H1 (cell line): ENCODE measurements at regions of chr14 and their contacts with region 1.

Region 1: GRCh38 chr14:95361373-95362137 is 41.8 kb upstream of the CLMN start:
- DNase-seq: peak; percentile 72 to 86
- H3K4me3 ChIP-seq: peak overlapping the region; percentile 30 to 56 (median 42); a peak in 7 of 8 replicates
- H3K27ac ChIP-seq: peak overlapping the region; percentile 47; the same call in 1 of the 2 replicates
- H3K4me1 ChIP-seq: peaks cover 7 to 31% (median 19%) of the 10 kb centered on the region in 4 experiments
- H3K27me3 ChIP-seq: peaks cover 0 to 2% (median 0%) of the 10 kb centered on the region in 4 experiments; a peak in 3 of 7 replicates
- CTCF ChIP-seq: peak; percentile 76 to 89 (median 81)
- EP300 ChIP-seq: no peak
- POLR2A ChIP-seq: 0 out of 3 replicates have a peak, but pooled peaks of 1 of the 2 experiments have one; percentile 59
- RAD21 ChIP-seq: peak; percentile 58 to 71

Region 2: GRCh38 chr14:95185033-95185766 is 176.4 kb before region 1 on chr14:
- CTCF ChIA-PET with region 1: interaction called, 10 read pairs
- POLR2A ChIA-PET with region 1: no interaction called
- DNase-seq: no peak
- H3K4me3 ChIP-seq: no peak overlapping the region
- H3K27ac ChIP-seq: no peak overlapping the region
- H3K4me1 ChIP-seq: no peaks in the 10 kb centered on the region; a peak in 1 of 7 replicates
- H3K27me3 ChIP-seq: no peaks in the 10 kb centered on the region
- CTCF ChIP-seq: no peak
- EP300 ChIP-seq: no peak
- POLR2A ChIP-seq: no peak
- RAD21 ChIP-seq: no peak

Region 3: DNA sequence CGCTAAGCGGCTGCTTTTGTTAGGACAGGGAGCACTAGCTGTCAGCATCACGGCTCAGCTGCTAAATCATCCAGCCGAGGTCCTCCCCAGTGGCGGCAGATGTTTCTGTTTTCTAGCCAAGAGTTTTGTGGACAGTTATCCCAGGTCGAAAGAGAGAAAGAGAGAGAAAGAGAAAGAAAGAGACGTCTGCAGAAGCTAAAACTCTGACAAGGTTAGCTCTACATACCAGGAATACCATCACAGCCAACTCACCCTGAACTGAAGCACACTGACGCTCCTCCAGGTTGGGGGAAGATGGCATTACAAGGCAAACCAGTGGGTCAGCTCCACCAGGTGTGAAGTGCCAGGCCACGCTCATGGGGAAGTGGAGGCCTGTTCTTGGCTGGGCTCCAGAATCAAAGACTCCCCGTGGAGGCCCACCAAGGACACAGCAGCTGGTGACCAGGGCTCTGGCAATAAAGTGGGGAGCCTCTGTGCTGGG is 139.4 kb before region 1 on chr14:
- CTCF ChIA-PET with region 1: interaction called, 11 read pairs
- POLR2A ChIA-PET with region 1: no interaction called
- DNase-seq: no peak
- H3K4me3 ChIP-seq: no peak overlapping the region
- H3K27ac ChIP-seq: no peak overlapping the region
- H3K4me1 ChIP-seq: peaks cover 11 to 36% (median 25%) of the 10 kb centered on the region in 4 experiments
- H3K27me3 ChIP-seq: peaks cover 0 to 8% (median 3%) of the 10 kb centered on the region in 4 experiments; a peak in 4 of 7 replicates
- CTCF ChIP-seq: no peak
- EP300 ChIP-seq: no peak
- POLR2A ChIP-seq: no peak
- RAD21 ChIP-seq: no peak

Region 4: DNA sequence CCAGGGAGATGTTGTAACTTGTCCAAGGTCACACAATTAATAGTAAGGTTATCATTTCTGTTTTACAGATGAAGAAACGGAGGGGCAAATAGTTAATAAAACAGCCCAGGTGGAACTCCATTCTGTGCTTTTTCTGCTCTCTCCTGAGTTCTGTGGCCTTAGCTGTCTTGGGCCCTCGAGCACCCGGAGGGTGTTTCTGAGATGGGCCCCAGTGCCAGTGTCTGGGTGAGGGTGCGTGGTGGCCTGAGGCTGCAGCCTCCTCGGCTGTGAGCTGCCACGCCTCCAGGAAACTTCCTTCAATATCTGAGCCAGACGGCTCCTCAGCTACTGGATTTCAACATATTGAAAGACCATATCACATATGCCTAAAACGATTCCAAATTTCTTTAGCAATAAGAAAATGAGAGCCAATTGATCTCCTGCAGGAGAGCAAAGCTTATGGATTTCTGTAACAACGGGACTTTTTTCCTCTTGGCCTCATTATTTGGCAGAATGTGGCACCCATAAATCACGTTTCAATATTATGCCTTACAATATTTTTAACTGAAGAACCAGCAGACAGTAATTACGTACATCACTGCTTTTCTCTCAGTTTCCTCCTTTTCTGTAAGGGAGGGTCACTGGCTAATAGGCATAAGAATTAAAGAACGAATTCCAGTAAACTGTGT is 129.5 kb before region 1 on chr14:
- CTCF ChIA-PET with region 1: interaction called, 10 read pairs
- POLR2A ChIA-PET with region 1: no interaction called
- DNase-seq: no peak
- H3K4me3 ChIP-seq: no peak overlapping the region
- H3K27ac ChIP-seq: no peak overlapping the region
- H3K4me1 ChIP-seq: peaks cover 0 to 3% (median 1%) of the 10 kb centered on the region in 4 experiments; a peak in 3 of 7 replicates
- H3K27me3 ChIP-seq: no peaks in the 10 kb centered on the region
- CTCF ChIP-seq: no peak
- EP300 ChIP-seq: no peak
- POLR2A ChIP-seq: no peak
- RAD21 ChIP-seq: no peak

Region 5: DNA sequence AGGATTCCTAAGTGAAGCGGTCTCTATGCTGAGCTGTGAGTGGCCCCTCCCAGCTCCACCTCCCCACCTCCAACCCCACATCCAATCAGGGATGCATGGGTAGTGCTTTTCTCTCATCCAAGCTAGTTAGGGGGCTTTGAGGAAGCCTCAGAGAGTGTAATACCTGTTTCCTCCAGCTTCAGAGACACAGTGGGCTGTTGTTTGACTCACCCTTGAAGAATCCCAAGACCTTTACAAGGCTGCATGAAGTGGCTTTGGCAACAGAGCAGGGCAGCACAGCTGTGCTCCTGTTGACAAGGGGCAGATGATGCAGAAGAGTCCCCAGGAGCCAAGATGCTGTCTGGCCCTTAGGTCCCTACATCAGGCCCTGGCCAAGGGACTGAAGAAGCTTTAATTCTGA is 14.7 kb before region 1 on chr14:
- CTCF ChIA-PET with region 1: interaction called, 39 read pairs
- POLR2A ChIA-PET with region 1: interaction called, 5 read pairs
- DNase-seq: no peak
- H3K4me3 ChIP-seq: no peak overlapping the region
- H3K27ac ChIP-seq: no peak overlapping the region
- H3K4me1 ChIP-seq: no peaks in the 10 kb centered on the region
- H3K27me3 ChIP-seq: no peaks in the 10 kb centered on the region
- CTCF ChIP-seq: no peak
- EP300 ChIP-seq: no peak
- POLR2A ChIP-seq: no peak
- RAD21 ChIP-seq: no peak